Right ventricle myocardium inferior (tissue), 1 donor: ENCODE measurements at regions of chr12 and their contacts with region 1.

Region 1: GRCh38 chr12:46364777-46365580 is 7.6 kb downstream of the SLC38A2 start:
- DNase-seq: no peak
- ATAC-seq: peak; percentile 68

Region 2: DNA sequence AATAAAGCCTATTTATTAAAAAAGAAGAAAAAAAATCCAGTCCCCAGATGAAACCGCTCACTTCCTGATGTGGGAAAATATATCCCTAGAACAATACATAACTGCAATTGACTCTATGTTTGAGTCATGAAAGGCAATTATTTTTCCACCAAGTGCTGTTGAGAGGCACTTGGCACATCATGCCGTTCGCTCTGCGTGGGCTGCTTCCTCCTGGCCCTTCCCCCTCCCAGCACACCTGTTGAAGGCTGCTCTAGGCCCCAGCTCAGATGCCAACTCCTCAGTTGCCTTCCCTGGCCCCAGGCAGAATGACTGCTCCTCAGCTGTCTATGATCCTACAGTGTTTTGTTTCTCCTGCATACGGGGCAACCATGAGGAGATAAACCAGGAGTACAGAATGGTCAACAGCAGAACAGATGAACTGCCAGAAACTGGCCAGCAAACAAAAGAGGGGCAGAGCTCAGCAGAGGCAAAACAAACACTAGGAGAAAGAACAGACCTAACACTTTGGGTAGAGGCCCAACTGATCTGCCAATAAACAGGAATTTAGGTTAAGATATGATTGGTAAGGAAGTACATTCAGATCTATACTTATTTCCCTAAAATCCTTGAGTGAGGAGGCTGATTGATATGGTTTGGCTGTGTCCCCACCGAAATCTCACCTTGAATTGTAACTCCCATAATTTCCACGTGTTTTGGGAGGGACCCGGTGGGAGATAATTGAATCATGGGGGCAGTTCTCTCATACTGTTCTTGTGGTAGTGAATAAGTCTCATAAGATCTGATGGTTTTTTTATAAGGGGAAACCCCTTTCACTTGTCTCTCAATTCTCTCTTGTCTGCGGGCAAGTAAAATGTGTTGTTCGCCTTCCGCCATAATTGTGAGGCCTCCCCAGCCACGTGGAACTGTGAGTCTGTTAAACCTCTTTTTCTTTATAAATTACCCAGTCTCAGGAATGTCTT is 154.8 kb before region 1 on chr12:
- intact Hi-C with region 1: loop called (anchors 5 kb)
- DNase-seq: no peak
- ATAC-seq: peak; percentile 86

Region 3: DNA sequence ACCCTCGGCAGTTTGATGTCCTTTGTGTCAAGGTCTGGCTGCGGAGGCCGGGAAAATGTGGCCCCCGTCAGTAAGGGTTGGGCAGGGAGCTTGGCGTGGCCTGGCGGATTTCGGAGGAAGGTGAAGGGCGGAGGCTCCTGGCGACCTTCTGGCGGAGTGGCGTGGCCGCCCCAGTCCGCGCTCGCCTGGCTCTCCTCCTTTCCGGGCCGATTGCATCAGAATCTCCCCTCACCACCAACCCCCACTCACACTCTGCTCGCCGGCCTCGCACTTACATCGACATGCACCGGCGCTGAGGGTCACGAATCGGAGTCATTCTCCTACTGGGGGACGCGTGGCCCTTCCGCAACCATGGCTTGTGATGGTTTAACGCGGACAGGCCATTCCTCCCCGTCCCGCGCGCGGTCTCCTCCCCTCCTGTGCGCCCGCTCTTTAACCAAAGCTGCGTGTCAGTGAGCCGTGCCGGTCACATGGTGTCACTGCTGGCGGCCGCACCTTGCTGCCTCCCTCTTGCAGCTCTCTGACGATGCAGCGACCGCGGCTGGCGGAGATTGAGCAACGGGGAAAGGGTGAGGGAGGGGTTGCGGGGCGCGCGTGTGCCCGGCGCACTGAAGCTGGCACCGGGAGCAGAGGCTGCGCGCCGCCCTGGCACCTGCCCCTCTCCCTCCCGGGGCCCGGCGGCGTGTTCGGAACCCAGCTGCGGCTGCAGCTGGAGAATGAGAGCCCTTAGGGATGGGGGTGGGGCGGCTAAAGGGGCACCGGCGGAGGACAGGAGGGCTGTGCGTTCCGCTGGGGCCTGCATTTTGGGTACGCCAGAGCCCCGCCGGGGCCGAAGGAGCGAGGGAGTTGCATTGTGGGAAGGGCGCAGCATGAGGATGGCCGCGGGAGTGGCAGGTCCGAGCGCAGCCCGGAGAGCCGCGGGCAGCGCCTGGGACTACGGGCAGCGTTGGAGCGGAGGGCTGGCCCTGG is 96.1 kb before region 1 on chr12 and contains the start of gene SLC38A1:
- intact Hi-C with region 1: loop called (anchors 5 kb)
- DNase-seq: peak; percentile 95
- ATAC-seq: peak; percentile 88
- total RNA-seq, gene SLC38A1: 140 TPM

Region 4: GRCh38 chr12:46332260-46332659 is 32.7 kb before region 1 on chr12:
- intact Hi-C with region 1: no loop called
- DNase-seq: no peak
- ATAC-seq: no peak

Region 5: DNA sequence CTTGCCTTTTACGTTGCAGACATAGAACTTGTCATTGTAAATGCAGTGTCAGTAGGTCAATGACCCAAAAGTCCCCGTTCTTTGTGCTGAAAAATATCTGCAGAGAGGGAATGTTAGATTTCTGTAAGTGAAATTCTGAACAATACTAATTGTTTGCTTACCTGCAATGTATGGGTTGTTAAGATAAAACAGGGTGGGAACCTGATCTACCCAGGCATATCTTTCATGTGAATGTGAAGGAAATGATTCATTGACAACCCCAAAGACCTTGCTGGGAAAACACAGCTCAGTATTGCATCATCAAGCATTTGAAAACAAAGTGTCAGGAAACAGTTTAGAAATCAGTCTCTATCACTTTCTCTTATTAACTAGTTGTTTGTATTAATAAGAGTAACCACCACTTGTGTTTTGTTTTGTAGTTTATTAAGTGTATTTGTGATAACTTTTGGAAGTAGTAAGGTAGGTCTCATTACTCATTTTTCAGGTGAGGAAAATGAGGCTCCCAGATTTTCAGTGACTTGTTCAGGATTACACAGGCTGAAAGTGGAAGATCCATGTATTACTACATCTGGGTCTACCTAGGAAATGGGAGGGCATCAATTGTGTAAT is 65.5 kb after region 1 on chr12:
- intact Hi-C with region 1: no loop called
- DNase-seq: no peak
- ATAC-seq: peak; percentile 50

Region 6: GRCh38 chr12:46590991-46591703 is 226.2 kb after region 1 on chr12:
- intact Hi-C with region 1: no loop called
- DNase-seq: no peak
- ATAC-seq: no peak